ENCODE measurements at regions of chr11 and their contacts with region 1.

Region 1: GRCh38 chr11:73307323-73308002 is 613 bp upstream of the ARHGEF17 start:
- DNase-seq: peak; percentile 96 to 98 (median 97)
- H3K4me3 ChIP-seq: peak overlapping the region; percentile 57 to 91 (median 81)
- H3K27ac ChIP-seq: peak overlapping the region; percentile 40 to 50
- H3K4me1 ChIP-seq: peaks cover 3 to 50% (median 49%) of the 10 kb centered on the region in 4 experiments
- H3K27me3 ChIP-seq: no peaks in the 10 kb centered on the region

Region 2: DNA sequence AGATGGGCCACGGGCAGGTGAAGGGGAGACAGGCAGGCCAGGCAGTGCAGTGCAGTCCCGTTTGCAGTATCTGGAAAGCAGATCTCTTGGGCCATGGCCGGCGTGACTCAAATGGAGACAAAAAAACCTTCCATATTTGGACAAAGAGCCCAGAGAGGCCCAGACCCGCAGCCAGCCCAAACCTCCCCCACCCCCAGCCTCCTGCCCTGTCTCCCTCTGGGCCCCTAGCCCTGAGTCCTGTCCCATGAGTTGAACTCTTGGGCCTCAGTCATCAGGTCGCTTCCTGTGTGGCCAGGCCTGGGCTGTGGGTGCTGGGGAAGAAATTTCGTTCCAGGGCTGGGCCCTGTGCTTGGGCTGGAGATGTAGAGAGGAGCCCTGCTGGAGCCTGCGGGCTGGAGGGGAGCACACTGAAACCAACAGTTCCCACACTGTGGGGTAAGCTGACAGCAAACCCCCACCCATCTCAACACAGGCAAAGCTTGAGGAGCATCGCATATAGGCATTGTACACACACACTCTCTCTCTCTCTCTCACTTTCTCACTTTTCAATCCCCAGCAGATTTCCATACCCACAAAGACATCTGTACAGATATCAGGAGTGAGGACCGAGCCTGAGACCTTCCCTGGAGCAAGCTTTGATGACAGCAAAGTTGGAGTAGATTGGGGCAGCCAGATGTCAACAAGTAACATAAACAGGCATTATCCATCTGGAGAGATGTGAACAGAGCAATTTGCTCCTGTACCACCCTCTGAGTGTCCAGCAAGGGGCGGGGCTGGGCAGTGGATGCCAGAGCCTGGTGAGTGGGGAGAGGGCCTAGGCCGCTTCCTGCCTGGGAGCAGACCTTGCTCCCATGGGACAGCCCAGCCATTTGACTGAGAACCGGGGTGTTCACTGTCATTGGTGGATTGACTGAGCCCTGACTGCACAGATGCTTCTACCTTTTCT is 17.8 kb after region 1 on chr11:
- CTCF ChIA-PET with region 1: interaction called, 323 read pairs
- POLR2A ChIA-PET with region 1: interaction called, 56 read pairs
- DNase-seq: no peak
- H3K4me3 ChIP-seq: no peak overlapping the region
- H3K27ac ChIP-seq: peak overlapping the region in 1 of 2 experiments; percentile 46
- H3K4me1 ChIP-seq: peaks cover 16 to 80% (median 73%) of the 10 kb centered on the region in 4 experiments
- H3K27me3 ChIP-seq: no peaks in the 10 kb centered on the region

Region 3: DNA sequence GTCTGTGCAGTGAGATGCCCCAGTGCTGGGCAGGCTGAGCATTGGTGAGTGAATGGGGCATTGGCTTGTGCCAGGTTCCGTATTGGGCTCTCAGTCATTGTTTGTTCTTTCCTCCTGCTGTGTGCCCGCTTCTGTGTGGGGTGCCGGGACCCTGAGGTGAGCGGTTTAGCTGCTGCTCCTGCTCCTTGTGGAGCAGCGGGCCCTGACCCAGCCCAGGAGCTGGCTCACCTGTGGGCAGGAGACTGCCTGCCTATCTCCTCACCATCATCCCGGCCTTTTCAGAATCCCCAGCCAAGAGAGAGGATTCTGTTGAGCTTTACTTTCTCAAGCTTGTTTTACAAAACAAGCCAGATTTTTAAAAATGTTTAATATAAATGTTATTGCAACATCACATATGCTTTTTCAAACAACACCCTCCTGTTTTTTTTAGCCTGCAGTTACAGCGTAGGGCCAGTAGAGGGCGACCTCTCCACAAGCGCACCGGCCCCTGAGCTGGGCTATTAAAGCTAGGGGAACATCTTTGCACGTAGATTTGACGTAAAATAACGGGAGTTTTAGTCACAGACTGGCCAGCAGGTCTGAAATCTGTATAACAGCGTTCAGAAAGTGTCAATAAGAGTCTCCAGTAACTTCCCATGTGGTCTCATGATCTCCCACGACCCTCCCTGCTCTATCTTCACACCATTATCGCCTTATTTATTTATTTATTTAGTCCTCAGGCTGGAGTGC is 43.6 kb after region 1 on chr11:
- CTCF ChIA-PET with region 1: interaction called, 27 read pairs
- POLR2A ChIA-PET with region 1: no interaction called
- DNase-seq: peak; percentile 75 to 86 (median 83)
- H3K4me3 ChIP-seq: no peak overlapping the region
- H3K27ac ChIP-seq: no peak overlapping the region
- H3K4me1 ChIP-seq: no peaks in the 10 kb centered on the region
- H3K27me3 ChIP-seq: no peaks in the 10 kb centered on the region